ENCODE measurements at regions of chr2 and their contacts with region 1.

Region 1: GRCh38 chr2:177332041-177332991 is 60.3 kb upstream of the AGPS start:
- DNase-seq: peak; percentile 23 to 33
- ATAC-seq: peak; percentile 83 to 91
- H3K4me3 ChIP-seq: no peak overlapping the region
- H3K27ac ChIP-seq: no peak overlapping the region
- H3K4me1 ChIP-seq: peaks cover 0 to 5% of the 10 kb centered on the region in 2 donors
- H3K27me3 ChIP-seq: no peaks in the 10 kb centered on the region
- CTCF ChIP-seq: peak; percentile 51 to 75 (median 64)
- POLR2A ChIP-seq: no peak

Region 2: DNA sequence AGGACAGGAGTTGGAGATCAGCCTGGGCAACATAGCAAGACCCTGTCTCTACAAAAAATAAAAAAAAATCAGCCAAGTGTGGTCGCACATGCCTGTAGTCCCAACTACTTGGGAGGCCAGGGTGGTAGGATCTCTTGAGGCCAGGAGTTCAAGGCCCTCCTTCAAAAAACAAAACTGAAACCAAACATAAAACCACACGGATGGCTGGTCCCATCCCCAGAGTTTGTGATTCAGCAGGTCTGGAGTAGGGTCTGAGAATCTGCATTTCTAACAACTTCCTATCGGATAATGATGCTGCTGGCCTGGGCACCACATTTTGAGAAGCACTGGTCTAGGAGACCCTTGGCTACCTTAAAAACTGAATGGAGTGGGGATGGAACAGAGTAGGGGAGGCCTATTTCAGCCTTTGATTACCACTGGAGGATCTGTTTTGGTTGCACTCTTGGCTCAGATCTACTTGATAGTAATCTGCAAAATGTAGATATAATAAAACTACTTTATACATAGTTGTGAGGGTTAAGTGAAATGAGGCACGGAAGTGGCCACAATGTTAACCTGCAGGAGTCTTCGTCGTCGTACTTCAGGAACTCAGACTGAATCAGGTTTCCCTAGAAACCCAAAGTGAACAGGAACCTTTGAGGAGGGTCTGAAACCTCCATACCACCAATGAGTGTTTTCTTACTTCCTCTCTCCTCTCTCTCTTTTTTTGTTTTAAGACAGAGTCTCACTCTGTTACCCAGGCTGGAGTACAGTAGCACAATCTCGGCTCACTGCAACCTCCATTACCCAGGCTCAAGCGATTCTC is 42.3 kb before region 1 on chr2:
- in situ Hi-C with region 1: no loop called
- intact Hi-C with region 1: no loop called
- DNase-seq: no peak
- ATAC-seq: no peak
- H3K4me3 ChIP-seq: no peak overlapping the region
- H3K27ac ChIP-seq: no peak overlapping the region
- H3K4me1 ChIP-seq: peaks cover 9 to 14% of the 10 kb centered on the region in 2 donors
- H3K27me3 ChIP-seq: no peaks in the 10 kb centered on the region
- CTCF ChIP-seq: no peak
- POLR2A ChIP-seq: no peak

Region 3: GRCh38 chr2:177419274-177419673 is 87.0 kb after region 1 on chr2:
- in situ Hi-C with region 1: loop called (anchors 5 to 10 kb)
- intact Hi-C with region 1: loop called (anchors 1 kb)
- DNase-seq: no peak
- ATAC-seq: no peak
- H3K4me3 ChIP-seq: no peak overlapping the region
- H3K27ac ChIP-seq: no peak overlapping the region
- H3K4me1 ChIP-seq: peaks cover 9% of the 10 kb centered on the region in 2 donors
- H3K27me3 ChIP-seq: no peaks in the 10 kb centered on the region
- CTCF ChIP-seq: no peak
- POLR2A ChIP-seq: no peak

Region 4: DNA sequence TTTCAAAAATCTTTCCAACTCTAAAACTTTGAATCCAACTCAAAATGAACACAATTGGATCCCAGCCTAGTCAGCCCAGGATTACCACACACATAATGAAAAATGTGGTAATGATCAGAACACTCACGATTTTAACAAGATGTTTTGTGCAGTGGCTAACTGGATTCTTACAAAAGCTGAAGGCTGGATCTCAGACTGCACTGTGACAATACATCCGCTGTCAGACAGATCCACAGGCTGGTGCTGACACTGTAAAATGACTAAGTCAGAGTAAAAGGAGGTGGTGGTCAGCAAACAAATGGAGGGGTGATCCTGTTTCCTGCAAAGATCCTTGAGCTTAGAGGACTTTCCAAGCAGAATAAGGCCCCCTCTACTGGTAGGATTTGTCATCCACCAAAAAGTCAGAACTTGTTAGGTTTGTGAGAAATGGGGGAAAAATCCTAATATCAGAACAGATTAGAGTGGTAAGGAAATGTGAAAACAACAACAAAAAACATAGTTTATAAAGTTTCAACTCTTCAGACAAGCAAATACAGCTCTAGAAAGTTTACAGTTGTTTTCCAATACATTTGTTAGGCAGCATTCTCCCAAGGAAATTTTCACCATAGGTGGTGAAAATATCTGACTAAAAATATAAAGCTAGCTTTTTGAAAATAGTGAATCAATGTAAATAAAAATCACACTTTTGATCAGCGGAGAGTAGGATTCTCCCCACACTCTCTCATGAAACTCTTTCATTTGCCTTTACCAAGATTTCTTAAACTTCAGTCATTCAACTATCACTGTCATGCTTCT is 272.2 kb after region 1 on chr2:
- in situ Hi-C with region 1: loop called in 3 of 4 experiments (anchors 10 to 25 kb)
- intact Hi-C with region 1: loop called (anchors 5 kb)
- DNase-seq: no peak
- ATAC-seq: peak in 1 of 2 donors; percentile 44
- H3K4me3 ChIP-seq: no peak overlapping the region
- H3K27ac ChIP-seq: no peak overlapping the region
- H3K4me1 ChIP-seq: no peaks in the 10 kb centered on the region
- H3K27me3 ChIP-seq: no peaks in the 10 kb centered on the region
- CTCF ChIP-seq: peak in 3 of 5 experiments; percentile 31 to 60 (median 55)
- POLR2A ChIP-seq: no peak

Region 5: GRCh38 chr2:177618255-177619253 is 286.2 kb after region 1 on chr2:
- in situ Hi-C with region 1: loop called in 2 of 4 experiments (anchors 25 kb)
- intact Hi-C with region 1: no loop called
- DNase-seq: peak; percentile 82 to 84
- ATAC-seq: peak; percentile 98
- H3K4me3 ChIP-seq: peak overlapping the region; percentile 71 to 98 (median 86)
- H3K27ac ChIP-seq: peak overlapping the region; percentile 90 to 99 (median 94)
- H3K4me1 ChIP-seq: peaks cover 10 to 14% of the 10 kb centered on the region in 2 donors
- H3K27me3 ChIP-seq: no peaks in the 10 kb centered on the region
- CTCF ChIP-seq: no peak
- POLR2A ChIP-seq: peak in 1 of 2 donors; percentile 9

Region 6: DNA sequence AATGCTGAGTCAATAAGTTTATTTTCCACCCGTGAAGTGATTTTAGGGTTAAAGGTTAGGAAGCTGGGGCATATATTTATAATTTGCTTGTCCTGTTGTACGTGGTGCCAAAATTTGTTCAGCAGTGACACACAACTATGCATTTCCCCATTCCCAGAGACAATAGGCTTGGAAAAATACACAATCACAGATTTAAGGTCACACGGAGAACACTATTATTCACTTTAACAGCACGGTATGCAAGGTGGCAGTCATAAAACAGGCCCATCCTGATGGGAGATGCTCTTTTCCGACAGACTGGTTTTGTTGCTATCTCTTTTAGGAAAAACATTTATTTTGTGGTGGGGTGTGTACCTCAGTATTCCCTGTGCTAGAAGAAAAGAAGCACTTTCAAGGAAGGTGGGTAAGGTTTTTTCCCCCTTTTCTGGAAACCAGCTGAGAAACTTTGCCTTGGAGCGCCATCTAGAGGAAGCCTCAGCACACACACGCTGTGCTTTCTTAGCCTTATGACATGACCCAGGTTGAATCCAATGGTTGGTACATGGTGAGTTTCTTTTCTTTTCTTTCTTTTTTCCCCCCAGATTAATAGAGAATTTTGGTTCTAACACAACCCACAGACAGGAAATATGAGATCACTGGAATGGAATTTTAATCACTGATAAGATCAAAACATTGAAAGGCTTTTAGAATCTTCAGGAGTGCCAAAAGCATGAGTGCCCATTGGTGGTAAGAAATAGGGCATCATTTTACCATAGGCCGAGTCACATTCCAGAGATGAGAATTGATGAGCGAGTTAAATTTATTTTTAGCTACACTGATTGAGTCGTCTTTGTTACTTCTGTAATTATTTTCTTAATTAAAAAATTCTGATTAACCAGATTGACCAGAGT is 392.3 kb after region 1 on chr2:
- in situ Hi-C with region 1: loop called (anchors 5 to 25 kb)
- intact Hi-C with region 1: loop called (anchors 1 kb)
- DNase-seq: peak in 1 of 2 donors; percentile 14
- ATAC-seq: peak in 1 of 2 donors; percentile 73
- H3K4me3 ChIP-seq: no peak overlapping the region
- H3K27ac ChIP-seq: no peak overlapping the region
- H3K4me1 ChIP-seq: peaks cover 0 to 10% of the 10 kb centered on the region in 2 donors
- H3K27me3 ChIP-seq: no peaks in the 10 kb centered on the region
- CTCF ChIP-seq: peak; percentile 51 to 81 (median 78)
- POLR2A ChIP-seq: no peak

Region 7: DNA sequence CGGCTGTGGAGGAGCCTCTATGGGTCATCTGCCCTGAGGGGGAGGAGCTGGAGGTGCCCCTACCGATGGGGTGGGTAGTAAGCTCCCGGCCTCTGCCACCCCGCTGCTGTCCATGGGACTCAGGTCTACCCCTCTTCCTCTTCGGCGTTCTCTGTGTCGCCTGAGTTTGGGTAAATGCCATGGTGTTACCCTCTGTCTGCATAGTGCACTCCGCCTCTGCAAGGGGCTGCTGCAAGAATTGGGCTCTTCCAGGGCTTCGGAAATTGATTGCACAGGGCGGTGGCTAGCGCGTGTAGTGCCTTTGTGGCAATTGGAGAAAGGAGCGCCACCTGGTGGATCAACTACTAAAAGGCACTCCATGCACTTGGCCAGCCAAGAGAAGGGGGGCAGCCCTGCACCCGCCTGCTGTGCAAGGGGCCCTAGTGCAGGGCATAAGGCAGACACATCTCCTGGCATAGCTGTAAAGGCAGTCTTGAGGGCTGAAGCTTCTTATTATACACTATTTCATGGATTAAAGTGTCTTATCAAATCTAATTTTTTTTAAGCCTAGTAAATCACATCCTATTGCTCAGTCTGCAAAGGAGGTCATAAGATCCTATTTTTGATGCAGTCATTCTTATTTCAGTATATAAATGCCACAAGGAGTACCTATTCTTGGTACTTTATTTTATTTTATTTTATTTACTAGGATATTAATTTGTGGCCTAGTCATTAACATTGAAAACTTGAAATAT is 431.4 kb after region 1 on chr2:
- in situ Hi-C with region 1: loop called in 1 of 4 experiments (anchors 10 kb)
- intact Hi-C with region 1: loop called (anchors 2 kb)
- DNase-seq: peak; percentile 27 to 41
- ATAC-seq: peak; percentile 65 to 85
- H3K4me3 ChIP-seq: no peak overlapping the region
- H3K27ac ChIP-seq: no peak overlapping the region
- H3K4me1 ChIP-seq: peaks cover 0 to 3% of the 10 kb centered on the region in 2 donors
- H3K27me3 ChIP-seq: no peaks in the 10 kb centered on the region
- CTCF ChIP-seq: peak in 4 of 5 experiments; percentile 58 to 84 (median 68)
- POLR2A ChIP-seq: no peak